Posterior vena cava (tissue), 2 donors: ENCODE measurements at regions of chrX and their contacts with region 1.

Region 1: DNA sequence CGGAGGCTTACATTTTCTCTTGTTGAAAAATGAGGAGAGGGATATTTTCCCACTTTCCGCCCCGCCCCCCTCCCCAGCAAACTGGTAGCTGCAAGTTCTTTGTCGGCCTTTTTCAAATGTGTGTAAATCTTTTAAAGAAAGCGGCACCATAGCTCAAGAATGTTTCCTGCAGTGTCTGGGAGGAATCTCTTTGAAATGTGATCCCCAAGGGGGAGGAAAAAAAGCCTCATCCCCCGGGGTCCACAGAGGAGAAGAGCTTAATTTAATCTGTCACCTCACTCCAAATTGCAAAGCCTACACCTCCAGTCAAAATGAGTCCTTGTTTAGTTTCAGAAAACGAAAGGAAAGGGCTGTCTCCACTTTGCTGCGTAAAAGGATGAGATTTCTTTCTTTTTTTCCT is 34.8 kb downstream of the ASMT start:
- DNase-seq: no peak

Region 2: DNA sequence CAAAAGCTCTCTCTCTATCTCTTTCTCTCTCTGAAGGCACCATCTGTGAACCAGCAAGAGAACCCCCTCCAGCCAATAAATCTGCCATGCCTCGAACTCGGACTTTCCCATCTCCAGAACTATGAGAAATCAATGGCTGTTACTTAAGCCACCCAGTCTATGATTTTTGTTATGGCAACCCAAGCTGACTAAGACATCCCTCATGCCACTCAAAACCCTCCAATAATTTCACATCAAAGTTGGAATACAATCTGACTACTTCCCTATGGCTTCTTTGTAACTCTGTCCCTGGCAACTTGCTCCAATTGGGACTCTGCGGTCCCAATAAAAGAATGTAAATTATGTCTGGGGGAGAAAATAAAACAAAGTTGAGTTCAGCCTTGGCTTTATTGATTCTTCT is 753.4 kb before region 1 on chrX:
- intact Hi-C with region 1: no loop called
- DNase-seq: no peak

Region 3: GRCh38 chrX:1462596-1463251 is 186.9 kb before region 1 on chrX:
- intact Hi-C with region 1: loop called in 1 of 2 experiments (anchors 5 kb)
- DNase-seq: no peak

Region 4: GRCh38 chrX:1609311-1610161 is 40.1 kb before region 1 on chrX:
- intact Hi-C with region 1: loop called in 1 of 2 experiments (anchors 1 kb)
- DNase-seq: no peak

Region 5: GRCh38 chrX:2589186-2590030 is 939.8 kb after region 1 on chrX:
- intact Hi-C with region 1: loop called (anchors 5 to 10 kb)
- DNase-seq: no peak